A549 (cell line): ENCODE measurements at regions of chr10 and their contacts with region 1.

Region 1: DNA sequence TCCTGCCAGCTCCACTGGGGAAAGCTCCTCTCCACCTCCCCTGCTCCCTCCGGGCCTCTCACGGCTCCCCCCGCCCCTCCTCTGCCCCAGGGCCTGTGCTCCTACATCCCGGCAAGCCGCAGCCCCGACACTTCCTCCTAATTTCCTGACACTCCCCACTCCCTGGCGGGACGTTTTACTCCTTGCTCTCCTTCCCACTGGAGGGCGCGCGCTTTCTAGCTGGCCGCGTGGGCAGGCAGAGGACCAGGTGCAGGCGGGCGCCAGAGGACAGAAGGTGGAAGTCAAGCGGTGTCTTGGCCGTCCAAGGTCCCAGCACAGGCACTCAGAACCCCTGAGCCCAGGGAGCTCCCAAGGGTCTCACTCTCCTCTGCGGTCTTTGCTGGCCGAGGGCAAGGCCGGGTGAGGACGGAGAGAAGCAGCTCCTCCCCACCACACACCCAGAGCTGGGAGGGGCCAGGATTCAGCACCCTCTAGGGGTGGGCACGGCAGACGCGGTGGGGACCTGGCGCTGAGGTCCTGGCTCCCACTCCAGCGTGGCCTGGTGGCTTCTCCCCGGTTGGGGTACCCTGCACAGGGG is 19.1 kb downstream of the ADAM8 start:
- DNase-seq: peak; percentile 78 to 87
- ATAC-seq: peak; percentile 52 to 82
- H3K4me3 ChIP-seq: peak overlapping the region; percentile 36
- H3K27ac ChIP-seq: peak overlapping the region; percentile 80 to 91
- H3K4me1 ChIP-seq: peaks cover 41% of the 10 kb centered on the region
- CTCF ChIP-seq: peak; percentile 66
- EP300 ChIP-seq: no peak
- POLR2A ChIP-seq: peak; percentile 46
- RAD21 ChIP-seq: peak; percentile 54 to 55

Region 2: DNA sequence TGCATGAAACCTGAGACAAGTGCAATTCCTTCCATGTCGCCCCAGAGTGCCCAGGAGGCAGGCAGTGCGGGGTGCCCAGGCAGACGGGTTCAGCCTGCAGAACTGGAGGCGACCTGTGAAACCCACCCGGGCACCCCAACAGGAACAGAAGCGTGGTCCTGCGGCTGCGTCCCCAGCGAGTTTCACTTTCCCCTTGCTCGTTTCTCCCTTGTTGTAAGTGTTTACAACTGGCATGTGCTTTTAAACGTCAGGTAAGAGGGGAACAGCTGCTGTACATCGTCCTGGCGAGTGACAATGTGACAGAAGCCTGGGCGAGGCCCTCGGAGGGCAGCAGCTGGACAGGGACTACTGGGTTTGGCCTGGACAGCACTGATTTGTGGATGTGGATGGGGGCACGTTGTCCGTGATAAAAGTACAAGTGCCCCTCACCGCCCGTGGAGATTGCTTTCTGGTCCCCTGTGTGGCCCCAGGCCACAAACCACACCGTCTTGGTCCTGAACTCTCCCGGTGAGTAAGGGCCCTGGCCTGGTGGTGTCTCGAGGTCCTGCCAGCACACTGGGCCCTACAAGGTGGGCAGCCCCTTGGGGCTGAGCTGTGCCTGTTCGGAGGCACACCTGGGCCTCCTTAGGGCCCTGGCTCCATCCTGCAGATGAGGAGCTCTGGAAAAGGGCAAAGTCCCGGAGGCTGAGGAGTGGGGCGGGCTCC is 15.9 kb before region 1 on chr10:
- CTCF ChIA-PET with region 1: interaction called, 39 read pairs
- POLR2A ChIA-PET with region 1: no interaction called
- DNase-seq: no peak
- ATAC-seq: no peak
- H3K4me3 ChIP-seq: no peak overlapping the region
- H3K27ac ChIP-seq: no peak overlapping the region
- H3K4me1 ChIP-seq: peaks cover 20% of the 10 kb centered on the region
- CTCF ChIP-seq: no peak
- EP300 ChIP-seq: no peak
- POLR2A ChIP-seq: no peak
- RAD21 ChIP-seq: no peak